Right ventricle myocardium superior (tissue), 1 donor: ENCODE measurements at regions of chr12 and their contacts with region 1.

Region 1: DNA sequence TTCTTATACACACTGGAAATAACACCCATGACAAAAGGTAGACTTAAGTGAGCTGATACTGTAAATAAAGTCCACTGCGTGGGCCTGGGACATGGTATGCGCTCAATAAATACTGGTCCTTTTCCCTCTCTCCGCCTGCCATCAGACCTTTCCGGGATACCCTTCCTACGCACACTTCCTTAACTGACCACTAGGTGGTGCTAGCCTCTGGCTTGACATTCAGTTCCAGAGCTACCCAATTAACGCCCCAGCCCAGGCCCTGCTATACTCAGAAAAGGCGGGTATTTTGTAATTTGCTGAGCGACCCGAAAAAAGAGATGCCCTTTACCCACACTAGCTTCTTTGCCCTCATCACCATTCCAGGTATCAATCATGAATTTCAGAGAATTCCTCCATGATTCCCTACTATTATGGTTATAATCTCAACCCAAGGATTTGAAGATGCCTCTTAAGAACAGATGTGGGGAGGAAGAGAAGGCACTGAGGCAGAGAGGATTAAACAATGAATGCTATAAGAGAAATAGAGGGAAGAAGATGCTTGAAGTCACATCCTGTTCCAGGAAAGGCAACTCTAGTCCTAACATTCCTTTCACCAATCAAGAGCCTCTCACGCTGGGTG is 3.9 kb upstream of the LRP1 start:
- DNase-seq: peak; percentile 63
- ATAC-seq: peak; percentile 15

Region 2: DNA sequence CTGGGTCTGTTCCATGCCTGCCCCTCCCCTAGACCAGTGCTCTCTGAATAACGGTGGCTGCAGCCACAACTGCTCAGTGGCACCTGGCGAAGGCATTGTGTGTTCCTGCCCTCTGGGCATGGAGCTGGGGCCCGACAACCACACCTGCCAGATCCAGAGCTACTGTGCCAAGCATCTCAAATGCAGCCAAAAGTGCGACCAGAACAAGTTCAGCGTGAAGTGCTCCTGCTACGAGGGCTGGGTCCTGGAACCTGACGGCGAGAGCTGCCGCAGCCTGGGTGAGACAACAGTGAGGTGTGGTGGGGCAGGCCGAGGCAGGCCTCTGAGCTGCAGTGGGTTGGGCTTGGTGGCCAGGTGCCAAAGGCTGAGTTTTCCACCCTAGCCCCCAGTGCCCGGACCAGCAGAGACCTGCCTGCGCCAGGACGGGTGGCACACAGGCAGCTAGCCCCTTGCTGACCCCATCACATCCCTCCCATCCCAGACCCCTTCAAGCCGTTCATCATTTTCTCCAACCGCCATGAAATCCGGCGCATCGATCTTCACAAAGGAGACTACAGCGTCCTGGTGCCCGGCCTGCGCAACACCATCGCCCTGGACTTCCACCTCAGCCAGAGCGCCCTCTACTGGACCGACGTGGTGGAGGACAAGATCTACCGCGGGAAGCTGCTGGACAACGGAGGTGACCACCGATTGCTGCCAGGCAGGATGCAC is 51.2 kb after region 1 on chr12:
- intact Hi-C with region 1: loop called (anchors 2 kb)
- DNase-seq: peak; percentile 92
- ATAC-seq: peak; percentile 63